SK-N-SH (cell line): ENCODE measurements at regions of chr2 and their contacts with region 1.

Region 1: DNA sequence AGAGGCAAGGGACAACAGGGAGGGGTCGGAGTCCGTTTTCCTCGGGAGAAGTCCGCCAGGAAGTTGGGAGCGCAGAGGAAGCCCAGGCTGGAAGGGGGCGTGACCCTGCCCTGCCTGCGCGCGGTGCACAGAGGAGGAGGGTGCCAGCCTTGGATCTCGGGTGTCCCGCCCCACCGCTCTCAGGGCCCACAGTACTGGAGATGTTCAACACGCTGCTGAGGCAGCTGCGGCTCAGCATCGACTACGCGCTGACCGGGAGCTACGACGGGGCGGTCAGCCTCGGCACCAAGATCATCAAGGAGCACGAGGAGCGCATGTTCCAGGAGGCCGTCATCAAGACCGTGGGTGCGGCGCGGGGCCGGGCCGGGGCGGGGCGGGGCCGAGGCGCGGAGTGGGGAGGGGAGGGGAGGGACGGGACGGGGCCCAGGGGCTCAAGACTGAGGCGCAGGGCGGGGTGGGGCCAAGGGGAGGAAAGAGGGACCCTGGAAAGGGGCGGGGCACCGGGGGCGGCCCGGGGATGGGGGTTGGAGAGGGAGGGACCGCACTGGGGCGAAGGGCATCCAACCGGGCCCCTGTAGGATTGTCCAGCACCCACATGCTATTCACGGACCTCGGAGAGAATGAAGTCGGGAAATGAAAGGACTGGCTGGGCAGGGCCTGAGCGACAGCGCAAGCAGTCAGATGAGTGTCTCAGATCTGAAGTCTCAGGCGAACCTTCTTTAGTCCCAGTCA is 36.6 kb downstream of the POMC start:
- DNase-seq: no peak
- H3K4me3 ChIP-seq: no peak overlapping the region
- H3K27ac ChIP-seq: no peak overlapping the region
- H3K4me1 ChIP-seq: peaks cover 0 to 3% of the 10 kb centered on the region in 2 experiments; a peak in 1 of 4 replicates
- H3K27me3 ChIP-seq: no peaks in the 10 kb centered on the region
- CTCF ChIP-seq: no peak
- EP300 ChIP-seq: no peak
- RAD21 ChIP-seq: no peak

Region 2: GRCh38 chr2:24984912-24985311 is 146.8 kb before region 1 on chr2:
- CTCF ChIA-PET with region 1: interaction called, 519 read pairs
- POLR2A ChIA-PET with region 1: no interaction called
- DNase-seq: peak; percentile 80
- H3K4me3 ChIP-seq: no peak overlapping the region
- H3K27ac ChIP-seq: peak overlapping the region in 1 of 2 experiments; percentile 85; a peak in 2 of 4 replicates
- H3K4me1 ChIP-seq: peaks cover 0 to 23% of the 10 kb centered on the region in 2 experiments; a peak in 2 of 4 replicates
- H3K27me3 ChIP-seq: no peaks in the 10 kb centered on the region
- CTCF ChIP-seq: no peak
- EP300 ChIP-seq: no peak
- RAD21 ChIP-seq: no peak; the same call in 1 of the 2 replicates

Region 3: DNA sequence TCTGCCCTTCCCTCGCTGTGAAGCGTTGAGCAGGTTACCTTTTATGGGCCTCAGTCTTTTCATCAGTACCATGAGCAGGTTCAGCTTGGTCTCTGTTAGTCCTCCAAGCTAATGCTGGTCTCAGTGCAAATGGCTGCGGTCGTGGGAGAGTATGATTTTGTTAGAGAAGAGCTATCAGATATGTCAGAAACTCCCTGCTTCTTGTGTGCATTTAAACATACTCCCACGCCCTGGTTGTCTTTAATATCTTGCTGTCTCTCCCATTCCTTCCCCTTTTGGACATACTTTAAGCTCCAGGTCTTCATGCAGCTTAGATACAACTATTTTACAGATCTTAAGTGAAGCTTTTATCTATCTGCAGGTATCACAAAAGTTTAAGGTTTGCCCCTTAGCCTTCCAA is 27.0 kb before region 1 on chr2:
- CTCF ChIA-PET with region 1: interaction called, 13 read pairs
- POLR2A ChIA-PET with region 1: no interaction called
- DNase-seq: no peak
- H3K4me3 ChIP-seq: no peak overlapping the region
- H3K27ac ChIP-seq: peak overlapping the region in 1 of 2 experiments; percentile 62; a peak in 1 of 4 replicates
- H3K4me1 ChIP-seq: peaks cover 0 to 17% of the 10 kb centered on the region in 2 experiments; a peak in 2 of 4 replicates
- H3K27me3 ChIP-seq: no peaks in the 10 kb centered on the region
- CTCF ChIP-seq: no peak
- EP300 ChIP-seq: no peak
- RAD21 ChIP-seq: no peak

Region 4: DNA sequence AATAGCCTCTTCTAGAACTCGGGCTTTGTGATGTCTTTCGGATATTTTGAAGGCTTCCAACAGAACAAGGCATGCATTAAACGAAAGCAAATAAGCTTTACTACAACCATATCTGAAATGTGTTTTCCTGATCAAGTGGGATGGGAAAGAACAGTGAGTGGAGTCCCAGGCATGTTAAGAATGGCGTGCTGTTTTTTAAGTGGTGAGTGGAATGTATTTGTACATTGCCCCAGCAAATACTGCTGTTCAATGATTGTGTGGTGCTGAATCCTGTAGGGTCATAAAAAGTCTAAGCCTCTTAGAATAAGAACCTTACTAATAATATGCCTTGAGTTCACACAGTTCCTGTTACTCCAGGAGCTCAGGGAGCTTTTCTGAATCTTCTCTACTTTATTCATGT is 15.8 kb before region 1 on chr2:
- CTCF ChIA-PET with region 1: interaction called, 32 read pairs
- POLR2A ChIA-PET with region 1: no interaction called
- DNase-seq: no peak
- H3K4me3 ChIP-seq: no peak overlapping the region
- H3K27ac ChIP-seq: no peak overlapping the region; a peak in 1 of 4 replicates
- H3K4me1 ChIP-seq: peaks cover 0 to 2% of the 10 kb centered on the region in 2 experiments; a peak in 1 of 4 replicates
- H3K27me3 ChIP-seq: no peaks in the 10 kb centered on the region
- CTCF ChIP-seq: no peak
- EP300 ChIP-seq: no peak
- RAD21 ChIP-seq: no peak

Region 5: DNA sequence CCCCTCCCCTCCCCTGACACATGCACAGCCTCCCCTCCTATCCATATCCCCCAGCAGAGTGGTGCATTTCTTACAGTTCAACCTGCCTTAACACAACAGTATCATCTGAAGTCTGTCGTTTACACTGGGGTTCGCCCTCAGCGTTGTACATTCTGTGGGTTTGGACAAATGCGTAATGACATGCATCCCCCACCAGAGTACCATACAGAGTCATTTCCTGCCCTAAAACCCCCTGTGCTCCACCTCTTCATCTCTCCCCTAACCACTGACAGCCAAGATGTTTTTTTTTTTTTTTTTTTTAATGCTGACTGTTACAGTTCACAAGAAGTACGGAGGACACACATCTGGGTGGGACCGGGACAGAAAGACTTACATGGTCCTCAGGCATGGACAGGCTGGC is 14.1 kb after region 1 on chr2:
- CTCF ChIA-PET with region 1: interaction called, 19 read pairs
- POLR2A ChIA-PET with region 1: no interaction called
- DNase-seq: no peak
- H3K4me3 ChIP-seq: no peak overlapping the region
- H3K27ac ChIP-seq: no peak overlapping the region
- H3K4me1 ChIP-seq: no peaks in the 10 kb centered on the region
- H3K27me3 ChIP-seq: no peaks in the 10 kb centered on the region
- CTCF ChIP-seq: no peak
- EP300 ChIP-seq: no peak
- RAD21 ChIP-seq: no peak